Naive thymus-derived CD8-positive, alpha-beta T cell (primary cell): ENCODE measurements at regions of chr21 and their contacts with region 1.

Region 1: GRCh38 chr21:36169436-36170128 is 13.0 kb downstream of the DOP1B start:
- DNase-seq: no peak
- ATAC-seq: no peak
- H3K4me3 Mint-ChIP-seq: no peak overlapping the region
- H3K27ac Mint-ChIP-seq: peak overlapping the region in 1 of 10 donors; percentile 28
- H3K4me1 Mint-ChIP-seq: peaks cover 4 to 25% (median 13%) of the 10 kb centered on the region in 4 donors
- H3K27me3 Mint-ChIP-seq: no peaks in the 10 kb centered on the region

Region 2: GRCh38 chr21:36156339-36156814 is 13.2 kb before region 1 on chr21:
- POLR2A ChIA-PET with region 1: interaction called, 12 read pairs
- DNase-seq: peak; percentile 99 to 100 (median 100)
- ATAC-seq: peak; percentile 84 to 89
- H3K4me3 Mint-ChIP-seq: peak overlapping the region; percentile 72 to 91 (median 82)
- H3K27ac Mint-ChIP-seq: peak overlapping the region in 7 of 10 donors; percentile 61 to 91 (median 85)
- H3K4me1 Mint-ChIP-seq: peaks cover 6 to 43% (median 32%) of the 10 kb centered on the region in 4 donors
- H3K27me3 Mint-ChIP-seq: no peaks in the 10 kb centered on the region

Region 3: GRCh38 chr21:36183144-36183795 is 13.7 kb after region 1 on chr21:
- POLR2A ChIA-PET with region 1: no interaction called
- DNase-seq: no peak
- ATAC-seq: no peak
- H3K4me3 Mint-ChIP-seq: no peak overlapping the region
- H3K27ac Mint-ChIP-seq: no peak overlapping the region
- H3K4me1 Mint-ChIP-seq: peaks cover 6 to 33% (median 10%) of the 10 kb centered on the region in 4 donors
- H3K27me3 Mint-ChIP-seq: no peaks in the 10 kb centered on the region

Region 4: GRCh38 chr21:36194045-36194444 is 24.5 kb after region 1 on chr21:
- POLR2A ChIA-PET with region 1: no interaction called
- DNase-seq: no peak
- ATAC-seq: no peak
- H3K4me3 Mint-ChIP-seq: no peak overlapping the region
- H3K27ac Mint-ChIP-seq: no peak overlapping the region
- H3K4me1 Mint-ChIP-seq: peaks cover 0 to 3% (median under 1%) of the 10 kb centered on the region in 4 donors
- H3K27me3 Mint-ChIP-seq: no peaks in the 10 kb centered on the region